CD4-positive, alpha-beta T cell (primary cell): ENCODE measurements at regions of chr1 and their contacts with region 1.

Region 1: DNA sequence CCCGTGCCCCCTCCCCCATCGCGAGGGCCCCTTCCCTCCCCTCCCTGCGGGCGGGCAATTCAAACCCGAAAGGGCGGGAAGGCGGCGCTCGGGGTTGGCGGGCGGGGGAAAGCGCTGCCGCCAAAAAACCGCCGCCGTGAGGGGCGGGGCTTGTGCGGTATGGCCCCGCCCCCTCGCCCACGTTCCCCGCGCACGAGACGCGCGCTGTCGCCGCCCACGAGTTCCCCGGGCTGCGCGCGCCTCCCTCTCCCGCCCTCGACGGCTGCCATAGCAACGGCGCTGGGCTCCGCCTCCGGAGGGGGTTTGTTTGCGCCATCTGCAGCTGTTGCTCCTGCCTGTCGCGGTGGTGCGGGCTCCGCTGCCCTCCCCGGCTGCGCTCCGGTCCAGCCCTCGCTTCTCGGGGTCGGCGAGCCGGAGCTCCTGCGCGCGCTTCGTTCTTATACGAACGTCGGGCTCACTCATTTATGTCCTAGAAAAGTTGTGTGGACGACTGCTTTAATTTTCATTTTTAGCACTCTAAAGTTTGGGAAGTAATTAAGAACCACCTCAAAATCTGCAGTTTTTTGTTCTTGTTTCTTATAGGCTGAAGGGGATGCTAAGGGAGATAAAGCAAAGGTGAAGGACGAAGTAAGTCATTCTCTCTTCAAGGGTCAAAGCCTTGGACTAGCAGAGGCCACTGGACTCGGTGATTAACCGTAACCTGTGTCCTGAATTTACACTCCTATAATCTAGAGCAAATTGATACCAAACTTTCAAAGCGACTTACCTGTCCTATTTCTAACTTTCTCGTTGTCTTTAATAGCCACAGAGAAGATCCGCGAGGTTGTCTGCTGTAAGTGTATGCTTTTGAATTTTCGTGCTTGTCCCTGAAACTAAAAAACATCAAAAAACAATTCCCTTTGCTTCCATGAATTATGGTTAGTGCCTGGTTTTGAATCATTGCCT is 933 bp downstream of the HMGN2 start:
- DNase-seq: peak; percentile 93 to 99 (median 96)
- ATAC-seq: peak; percentile 77
- H3K4me3 ChIP-seq: peak overlapping the region; percentile 78
- H3K4me3 Mint-ChIP-seq: peak overlapping the region; percentile 89
- H3K27ac ChIP-seq: peak overlapping the region; percentile 90 to 95
- H3K27ac Mint-ChIP-seq: peak overlapping the region; percentile 99
- H3K4me1 ChIP-seq: peaks cover 36% of the 10 kb centered on the region
- H3K4me1 Mint-ChIP-seq: peaks cover 53% of the 10 kb centered on the region
- H3K27me3 ChIP-seq: no peaks in the 10 kb centered on the region
- H3K27me3 Mint-ChIP-seq: no peaks in the 10 kb centered on the region
- CTCF ChIP-seq: no peak

Region 2: GRCh38 chr1:26431979-26432695 is 41.0 kb before region 1 on chr1 and contains the start of gene DHDDS:
- CTCF ChIA-PET with region 1: interaction called, 4 read pairs
- POLR2A ChIA-PET with region 1: interaction called, 66 read pairs
- intact Hi-C with region 1: loop called (anchors 2 kb)
- DNase-seq: peak; percentile 95 to 99 (median 98)
- ATAC-seq: peak; percentile 94
- H3K4me3 ChIP-seq: peak within 1 kb of the TSS; percentile 81
- H3K4me3 Mint-ChIP-seq: peak within 1 kb of the TSS; percentile 92
- H3K27ac ChIP-seq: peak within 1 kb of the TSS; percentile 36 to 77
- H3K27ac Mint-ChIP-seq: peak within 1 kb of the TSS; percentile 88
- H3K4me1 ChIP-seq: peaks cover 26% of the 10 kb centered on the region
- H3K4me1 Mint-ChIP-seq: peaks cover 23% of the 10 kb centered on the region
- H3K27me3 ChIP-seq: no peaks in the 10 kb centered on the region
- H3K27me3 Mint-ChIP-seq: no peaks in the 10 kb centered on the region
- CTCF ChIP-seq: no peak
- total RNA-seq, gene DHDDS: 26.3 to 26.8 TPM